ENCODE measurements at regions of chr9 and their contacts with region 1.

Region 1: DNA sequence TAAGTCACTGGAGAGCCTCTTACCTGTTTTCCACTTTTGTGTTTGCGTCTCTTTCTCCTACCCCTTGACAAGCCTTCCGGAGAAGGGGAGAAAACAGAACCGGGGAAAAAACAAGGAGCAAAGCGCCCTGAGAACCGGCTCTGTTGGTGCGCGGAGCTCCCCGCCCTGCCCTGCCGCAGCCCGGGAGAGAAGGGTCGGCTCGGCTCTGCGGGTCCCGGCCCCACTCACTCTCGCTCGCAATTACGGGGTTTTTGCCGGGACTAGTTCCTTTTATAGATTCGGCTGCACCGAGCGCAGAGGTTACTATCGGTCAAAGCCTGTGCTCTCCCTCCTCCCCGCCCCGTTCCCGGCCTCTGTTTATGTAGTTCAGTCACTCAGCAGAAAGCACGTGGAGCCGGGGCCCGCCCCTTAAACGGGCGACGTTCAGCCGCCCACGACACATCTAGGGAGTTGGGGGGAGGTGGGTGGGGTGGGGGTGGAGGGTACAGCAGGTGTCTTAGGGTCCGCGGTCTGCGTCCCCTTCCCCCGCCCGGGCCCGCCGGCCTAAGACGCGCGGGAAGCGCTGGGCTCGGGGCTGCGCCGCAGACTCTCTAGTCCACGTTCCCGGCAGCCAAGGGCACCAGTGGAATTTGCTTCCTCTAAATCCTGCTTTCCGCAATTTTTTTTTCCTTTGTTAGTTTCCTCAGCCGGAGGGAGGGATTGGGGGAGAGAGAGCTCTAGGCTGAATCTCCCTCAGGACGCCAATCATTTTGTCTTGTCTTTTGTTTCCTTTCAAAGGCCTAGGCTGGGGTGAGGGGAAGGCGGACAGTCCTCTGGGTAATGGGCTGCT is at the start of gene ABCA1:
- DNase-seq: peak; percentile 85
- ATAC-seq: peak; percentile 66
- H3K4me3 ChIP-seq: peak within 1 kb of the TSS; percentile 70 to 86 (median 85)
- H3K27ac ChIP-seq: peak within 1 kb of the TSS; percentile 79
- H3K4me1 ChIP-seq: peaks cover 51% of the 10 kb centered on the region
- H3K27me3 ChIP-seq: no peaks in the 10 kb centered on the region; a peak in 1 of 5 replicates
- CTCF ChIP-seq: no peak
- EP300 ChIP-seq: 0 out of 4 replicates have a peak, but pooled peaks of 1 of the 2 experiments have one; percentile 20
- POLR2A ChIP-seq: peak; percentile 81 to 94
- RAD21 ChIP-seq: 0 out of 2 replicates have a peak, but pooled peaks have one; percentile 20
- total RNA-seq, gene ABCA1: 40.0 and 63.8 TPM in 2 replicates

Region 2: GRCh38 chr9:104863180-104863883 is 64.8 kb before region 1 on chr9:
- CTCF ChIA-PET with region 1: interaction called, 3 read pairs
- POLR2A ChIA-PET with region 1: interaction called, 7 read pairs
- in situ Hi-C with region 1: no loop called
- intact Hi-C with region 1: loop called (anchors 1 kb)
- DNase-seq: peak; percentile 59
- ATAC-seq: peak; percentile 66
- H3K4me3 ChIP-seq: no peak overlapping the region
- H3K27ac ChIP-seq: peak overlapping the region; percentile 8
- H3K4me1 ChIP-seq: peaks cover 59% of the 10 kb centered on the region
- H3K27me3 ChIP-seq: no peaks in the 10 kb centered on the region
- CTCF ChIP-seq: peak; percentile 70
- EP300 ChIP-seq: no peak
- POLR2A ChIP-seq: no peak
- RAD21 ChIP-seq: peak; percentile 56

Region 3: GRCh38 chr9:104903609-104904008 is 24.5 kb before region 1 on chr9:
- CTCF ChIA-PET with region 1: no interaction called
- POLR2A ChIA-PET with region 1: interaction called, 25 read pairs
- in situ Hi-C with region 1: no loop called
- intact Hi-C with region 1: no loop called
- DNase-seq: peak; percentile 38
- ATAC-seq: peak; percentile 29
- H3K4me3 ChIP-seq: peak overlapping the region in 2 of 3 experiments; percentile 29 to 37; a peak in 3 of 6 replicates
- H3K27ac ChIP-seq: peak overlapping the region; percentile 43
- H3K4me1 ChIP-seq: peaks cover 100% of the 10 kb centered on the region
- H3K27me3 ChIP-seq: no peaks in the 10 kb centered on the region
- CTCF ChIP-seq: no peak
- EP300 ChIP-seq: no peak
- POLR2A ChIP-seq: peak in 1 of 2 experiments; percentile 25; a peak in 1 of 4 replicates
- RAD21 ChIP-seq: no peak

Region 4: DNA sequence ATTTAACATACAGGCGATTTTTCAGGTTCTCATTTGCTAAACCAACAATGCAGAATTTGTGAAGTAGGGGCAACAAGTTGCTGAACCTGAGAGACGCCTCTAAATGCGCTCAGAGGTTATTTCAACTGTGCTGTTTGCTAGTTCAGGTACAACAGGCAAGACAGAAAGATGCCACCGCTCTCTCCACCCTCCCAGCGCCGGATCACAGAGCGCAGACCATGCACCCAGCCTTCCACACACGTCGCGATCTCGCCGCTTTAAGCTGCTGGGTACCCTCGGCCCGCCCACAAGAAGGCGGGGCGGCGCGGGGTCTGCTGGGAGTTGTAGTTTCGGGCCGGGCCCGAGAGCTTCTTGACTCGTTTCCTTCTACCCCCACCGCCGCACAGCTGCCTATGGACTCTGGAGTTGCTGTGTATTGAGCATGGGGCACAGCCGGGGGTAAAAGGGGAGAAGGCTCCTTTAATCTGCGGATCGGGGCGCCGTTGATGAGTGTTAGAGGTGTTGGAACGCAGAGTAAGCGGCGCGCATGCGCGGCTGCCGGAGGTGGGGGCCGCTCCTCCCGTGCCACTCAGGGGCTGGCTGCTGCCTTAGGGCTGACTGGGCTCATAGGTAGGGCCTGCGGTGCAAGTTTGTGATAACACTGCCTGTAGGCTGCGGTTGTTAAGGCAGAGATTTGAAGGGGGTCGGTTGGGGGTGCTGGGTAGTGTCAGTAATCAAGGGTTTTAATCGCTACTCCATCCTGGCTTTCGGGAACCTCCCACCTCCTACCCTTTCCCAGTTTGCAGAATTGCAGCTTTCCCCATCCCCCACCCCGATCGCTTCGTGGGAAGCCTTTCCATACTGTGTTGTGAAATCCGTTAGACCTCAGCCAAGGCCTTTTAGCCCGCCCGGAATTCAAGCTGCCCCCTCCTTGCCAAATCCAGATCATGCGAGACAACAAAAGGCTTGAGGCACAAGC is 40.2 kb after region 1 on chr9:
- CTCF ChIA-PET with region 1: no interaction called
- POLR2A ChIA-PET with region 1: interaction called, 25 read pairs
- in situ Hi-C with region 1: no loop called
- intact Hi-C with region 1: loop called (anchors 2 kb)
- DNase-seq: peak; percentile 74
- ATAC-seq: peak; percentile 94
- H3K4me3 ChIP-seq: peak overlapping the region; percentile 81 to 98 (median 92)
- H3K27ac ChIP-seq: peak overlapping the region; percentile 59
- H3K4me1 ChIP-seq: peaks cover 25% of the 10 kb centered on the region
- H3K27me3 ChIP-seq: no peaks in the 10 kb centered on the region
- CTCF ChIP-seq: no peak; the same call in 1 of the 2 replicates
- EP300 ChIP-seq: no peak; a peak in 1 of 4 replicates
- POLR2A ChIP-seq: 0 out of 4 replicates have a peak, but pooled peaks of 1 of the 2 experiments have one; percentile 59
- RAD21 ChIP-seq: no peak

Region 5: DNA sequence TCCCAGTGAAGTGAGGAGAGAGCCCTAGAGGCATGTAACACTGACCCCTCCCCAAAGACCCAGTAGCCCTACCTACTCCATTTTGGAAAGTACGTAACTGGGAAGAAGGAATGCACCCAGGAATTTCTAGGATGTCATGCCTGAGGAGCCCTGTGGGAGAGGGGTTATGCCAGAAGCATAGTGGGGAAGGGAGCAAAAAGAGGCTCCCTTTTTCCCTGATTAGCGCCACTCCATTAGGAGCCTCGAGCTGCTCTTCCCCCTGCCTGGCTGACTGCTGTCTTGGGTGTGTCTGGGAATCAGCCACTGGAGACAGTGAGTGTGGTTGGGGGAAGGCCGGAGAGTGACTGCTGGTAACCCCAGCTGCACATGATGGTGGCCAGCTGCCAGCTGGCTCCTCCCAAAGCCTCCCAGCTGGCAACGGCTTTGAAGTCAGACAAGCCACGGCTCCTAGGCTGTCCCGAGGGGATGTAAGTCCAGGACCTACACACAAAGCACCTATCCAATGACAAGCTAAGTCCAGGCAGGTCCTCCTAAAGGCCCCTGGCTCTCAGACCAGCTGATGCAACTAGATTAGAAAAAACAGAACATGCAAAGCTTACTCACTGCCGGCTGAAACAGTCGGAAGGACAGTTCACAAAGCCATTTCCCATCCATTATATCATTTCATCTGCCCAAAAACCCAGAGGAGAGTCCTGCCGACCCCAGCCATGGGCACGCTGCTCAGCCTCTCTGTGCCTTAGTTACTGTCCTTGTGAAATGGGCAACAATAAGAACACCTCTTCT is 136.4 kb after region 1 on chr9:
- CTCF ChIA-PET with region 1: no interaction called
- POLR2A ChIA-PET with region 1: interaction called, 26 read pairs
- in situ Hi-C with region 1: loop called (anchors 10 kb)
- intact Hi-C with region 1: loop called (anchors 2 kb)
- DNase-seq: peak; percentile 96
- ATAC-seq: peak; percentile 89
- H3K4me3 ChIP-seq: peak overlapping the region; percentile 1 to 64 (median 46); a peak in 4 of 6 replicates
- H3K27ac ChIP-seq: peak overlapping the region; percentile 63
- H3K4me1 ChIP-seq: peaks cover 62% of the 10 kb centered on the region
- H3K27me3 ChIP-seq: no peaks in the 10 kb centered on the region
- CTCF ChIP-seq: no peak
- EP300 ChIP-seq: peak; percentile 60 to 67; a peak in 3 of 4 replicates
- POLR2A ChIP-seq: no peak; a peak in 1 of 4 replicates
- RAD21 ChIP-seq: no peak

Region 6: GRCh38 chr9:105244003-105244733 is 316.0 kb after region 1 on chr9 and contains the start of gene SLC44A1:
- CTCF ChIA-PET with region 1: no interaction called
- POLR2A ChIA-PET with region 1: no interaction called
- in situ Hi-C with region 1: no loop called
- intact Hi-C with region 1: loop called (anchors 2 kb)
- DNase-seq: peak; percentile 86
- ATAC-seq: peak; percentile 97
- H3K4me3 ChIP-seq: peak within 1 kb of the TSS; percentile 93 to 98 (median 97)
- H3K27ac ChIP-seq: peak within 1 kb of the TSS; percentile 68
- H3K4me1 ChIP-seq: peaks cover 63% of the 10 kb centered on the region
- H3K27me3 ChIP-seq: no peaks in the 10 kb centered on the region
- CTCF ChIP-seq: peak; percentile 54; the same call in 1 of the 2 replicates
- EP300 ChIP-seq: peak; percentile 64 to 81; a peak in 3 of 4 replicates
- POLR2A ChIP-seq: peak; percentile 57 to 62
- RAD21 ChIP-seq: peak; percentile 81; the same call in 1 of the 2 replicates
- total RNA-seq, gene SLC44A1: 30.4 and 40.8 TPM in 2 replicates

Measured in HepG2 (cell line).